ENCODE measurements at regions of chr1 and their contacts with region 1.

Region 1: DNA sequence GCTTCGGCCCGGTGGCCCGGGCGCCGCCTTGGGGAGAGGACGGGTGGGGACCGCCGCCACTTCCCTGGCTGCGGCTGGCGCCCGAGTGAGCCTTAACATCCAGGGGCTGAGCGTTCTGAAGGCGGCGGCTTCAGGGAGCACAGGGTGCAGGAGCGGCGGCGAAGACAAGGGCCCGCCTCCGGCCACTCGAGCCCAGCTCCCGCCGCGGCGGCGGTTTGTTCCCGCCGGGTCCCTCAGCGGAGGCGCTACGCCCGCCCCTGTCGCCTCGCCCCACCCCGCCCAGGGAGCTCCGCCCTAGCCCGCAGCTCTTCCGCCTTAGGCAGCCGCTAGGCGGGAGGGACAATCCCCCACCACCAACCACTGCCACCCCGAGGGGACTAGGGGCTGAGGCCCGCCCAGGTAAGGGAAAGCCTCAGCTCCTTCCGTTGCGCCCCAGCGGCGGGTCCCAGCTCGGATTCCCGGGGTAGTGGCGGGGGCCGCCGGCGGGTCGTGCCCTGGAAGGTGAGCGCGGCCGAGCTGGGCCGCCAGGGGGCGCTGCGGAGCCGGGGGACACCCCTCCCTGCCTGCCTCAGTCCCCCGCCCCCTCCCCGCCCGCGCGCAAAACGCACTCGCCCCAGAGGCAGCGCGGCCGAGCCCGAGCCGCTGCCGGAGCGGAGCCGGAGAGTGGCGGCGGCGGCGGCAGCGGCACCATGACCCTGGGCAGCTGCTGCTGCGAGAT is at the start of gene FOXD2:
- DNase-seq: peak; percentile 86
- H3K4me3 Mint-ChIP-seq: peak within 1 kb of the TSS; percentile 92
- H3K27ac Mint-ChIP-seq: peak within 1 kb of the TSS; percentile 35
- H3K4me1 Mint-ChIP-seq: peaks cover 17% of the 10 kb centered on the region
- H3K27me3 Mint-ChIP-seq: no peaks in the 10 kb centered on the region
- CTCF ChIP-seq: peak; percentile 97
- total RNA-seq, gene FOXD2: 0.27 and 0.44 TPM in 2 replicates

Region 2: DNA sequence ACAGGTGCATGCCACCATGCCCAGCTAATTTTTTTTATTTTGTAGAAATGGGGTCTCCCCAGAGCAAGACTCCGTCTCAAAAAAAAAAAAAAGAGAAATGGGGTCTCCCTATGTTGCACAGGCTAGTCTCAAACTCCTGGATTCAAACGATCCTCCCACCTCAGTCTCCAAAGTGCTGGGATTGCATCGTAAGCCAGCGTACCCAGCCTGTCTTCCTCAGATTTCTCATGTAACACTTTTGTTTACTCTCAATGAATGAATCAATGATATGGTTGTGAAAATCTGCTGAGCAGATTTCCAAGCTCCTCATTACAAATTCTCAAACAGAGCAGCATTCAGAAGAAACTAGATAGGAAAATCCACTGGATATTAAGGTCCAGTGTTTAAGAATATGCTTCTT is 97.4 kb before region 1 on chr1:
- CTCF ChIA-PET with region 1: no interaction called
- POLR2A ChIA-PET with region 1: no interaction called
- intact Hi-C with region 1: no loop called
- DNase-seq: no peak
- H3K4me3 Mint-ChIP-seq: no peak overlapping the region
- H3K27ac Mint-ChIP-seq: no peak overlapping the region
- H3K4me1 Mint-ChIP-seq: peaks cover 6% of the 10 kb centered on the region
- H3K27me3 Mint-ChIP-seq: no peaks in the 10 kb centered on the region
- CTCF ChIP-seq: no peak

Region 3: GRCh38 chr1:47371016-47371517 is 66.5 kb before region 1 on chr1:
- CTCF ChIA-PET with region 1: no interaction called
- POLR2A ChIA-PET with region 1: no interaction called
- intact Hi-C with region 1: no loop called
- DNase-seq: no peak
- H3K4me3 Mint-ChIP-seq: no peak overlapping the region
- H3K27ac Mint-ChIP-seq: peak overlapping the region; percentile 17
- H3K4me1 Mint-ChIP-seq: peaks cover 12% of the 10 kb centered on the region
- H3K27me3 Mint-ChIP-seq: no peaks in the 10 kb centered on the region
- CTCF ChIP-seq: no peak

Region 4: GRCh38 chr1:47424336-47424982 is 13.1 kb before region 1 on chr1:
- CTCF ChIA-PET with region 1: interaction called, 41 read pairs
- POLR2A ChIA-PET with region 1: interaction called, 3 read pairs
- intact Hi-C with region 1: no loop called
- DNase-seq: peak; percentile 81
- H3K4me3 Mint-ChIP-seq: no peak overlapping the region
- H3K27ac Mint-ChIP-seq: no peak overlapping the region
- H3K4me1 Mint-ChIP-seq: peaks cover 11% of the 10 kb centered on the region
- H3K27me3 Mint-ChIP-seq: no peaks in the 10 kb centered on the region
- CTCF ChIP-seq: peak; percentile 68

Region 5: DNA sequence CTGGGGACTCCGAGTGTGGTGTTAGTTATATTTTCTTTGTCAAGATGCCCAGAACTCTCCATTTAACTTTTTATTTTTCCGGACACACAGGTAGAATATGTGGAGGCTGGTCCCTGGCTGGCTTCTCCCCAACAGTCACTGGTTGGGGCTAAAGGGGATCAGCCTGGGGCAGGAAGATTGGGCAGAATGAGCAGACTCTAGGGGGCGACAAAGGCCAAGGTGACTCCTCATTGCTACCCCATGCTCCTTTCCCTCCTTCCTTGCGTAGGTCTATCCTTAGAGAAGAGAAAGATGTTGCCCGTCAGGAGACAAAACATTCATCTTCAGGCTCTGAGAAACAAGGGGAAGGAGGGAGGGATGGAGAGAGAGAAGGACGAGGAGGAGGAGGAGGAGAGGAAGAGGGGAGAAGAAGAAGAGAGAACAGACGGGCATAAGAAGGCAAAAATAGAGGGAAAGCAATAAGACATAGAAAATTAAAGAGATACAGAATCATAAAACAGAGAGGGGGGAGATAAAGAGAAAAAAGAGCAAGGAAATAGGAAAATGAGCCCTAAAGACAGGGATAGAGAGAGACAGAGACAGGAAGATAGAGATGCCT is 90.2 kb after region 1 on chr1:
- CTCF ChIA-PET with region 1: interaction called, 8 read pairs
- POLR2A ChIA-PET with region 1: interaction called, 3 read pairs
- intact Hi-C with region 1: loop called (anchors 5 kb)
- DNase-seq: peak; percentile 51
- H3K4me3 Mint-ChIP-seq: no peak overlapping the region
- H3K27ac Mint-ChIP-seq: no peak overlapping the region
- H3K4me1 Mint-ChIP-seq: no peaks in the 10 kb centered on the region
- H3K27me3 Mint-ChIP-seq: no peaks in the 10 kb centered on the region
- CTCF ChIP-seq: peak; percentile 46

Region 6: GRCh38 chr1:47696740-47697441 is 259.3 kb after region 1 on chr1:
- CTCF ChIA-PET with region 1: interaction called, 696 read pairs
- POLR2A ChIA-PET with region 1: interaction called, 3 read pairs
- intact Hi-C with region 1: no loop called
- DNase-seq: no peak
- H3K4me3 Mint-ChIP-seq: no peak overlapping the region
- H3K27ac Mint-ChIP-seq: no peak overlapping the region
- H3K4me1 Mint-ChIP-seq: no peaks in the 10 kb centered on the region
- H3K27me3 Mint-ChIP-seq: no peaks in the 10 kb centered on the region
- CTCF ChIP-seq: no peak

Region 7: DNA sequence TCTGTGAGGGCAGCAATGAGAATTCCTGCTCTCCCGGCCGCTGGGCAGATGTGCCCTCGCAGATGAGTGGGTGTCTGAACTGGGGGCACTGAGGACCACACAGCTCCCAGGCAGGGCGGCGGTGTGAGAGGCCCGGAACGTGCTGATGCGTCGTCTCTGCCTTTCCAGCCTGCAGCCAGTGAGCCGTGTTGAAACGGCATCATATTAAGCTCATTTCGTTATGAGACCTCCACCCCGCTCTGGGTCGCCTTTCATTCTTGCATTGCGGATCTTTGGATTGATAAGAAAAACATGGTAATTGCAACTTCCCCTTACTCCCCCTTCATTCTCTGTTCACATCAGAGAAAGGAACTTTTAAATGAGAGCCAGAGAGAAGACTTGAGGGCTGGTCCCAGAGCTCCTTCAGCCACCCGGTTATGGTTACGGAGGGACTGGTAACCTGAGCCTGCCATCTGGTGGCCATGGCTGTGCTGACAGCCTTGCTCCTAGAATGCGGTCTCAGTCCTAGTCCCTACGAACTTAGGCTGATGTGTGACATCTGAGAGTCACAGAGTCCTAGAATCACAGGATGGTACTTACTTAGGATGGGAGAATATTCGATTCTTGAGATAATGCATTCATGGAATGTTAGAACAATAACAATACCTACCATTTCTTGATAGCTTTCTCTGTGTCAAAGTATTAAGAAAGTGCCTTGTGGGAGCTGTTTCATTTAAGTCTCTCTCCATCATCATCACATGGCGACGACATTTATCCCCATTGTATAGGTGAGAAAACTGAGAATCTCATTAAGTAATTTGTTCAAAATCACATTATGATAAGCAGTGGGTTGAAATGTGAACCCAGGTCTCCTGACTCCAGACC is 288.6 kb after region 1 on chr1:
- CTCF ChIA-PET with region 1: interaction called, 696 read pairs
- POLR2A ChIA-PET with region 1: interaction called, 13 read pairs
- intact Hi-C with region 1: loop called (anchors 1 kb)
- DNase-seq: peak; percentile 76
- H3K4me3 Mint-ChIP-seq: peak overlapping the region; percentile 22
- H3K27ac Mint-ChIP-seq: no peak overlapping the region
- H3K4me1 Mint-ChIP-seq: peaks cover 9% of the 10 kb centered on the region
- H3K27me3 Mint-ChIP-seq: no peaks in the 10 kb centered on the region
- CTCF ChIP-seq: peak; percentile 75